IMR-90 (cell line): ENCODE measurements at regions of chr2 and their contacts with region 1.

Region 1: GRCh38 chr2:48420512-48421197 is 109.3 kb upstream of the STON1 start:
- DNase-seq: peak; percentile 88
- ATAC-seq: peak; percentile 91
- H3K4me3 ChIP-seq: no peak overlapping the region
- H3K27ac ChIP-seq: no peak overlapping the region; the same call in 1 of the 2 replicates
- H3K4me1 ChIP-seq: peaks cover 3% of the 10 kb centered on the region
- H3K27me3 ChIP-seq: no peaks in the 10 kb centered on the region
- CTCF ChIP-seq: peak; percentile 99
- POLR2A ChIP-seq: peak; percentile 50; the same call in 1 of the 2 replicates
- RAD21 ChIP-seq: peak; percentile 99

Region 2: GRCh38 chr2:47344890-47345589 is 1075.6 kb before region 1 on chr2:
- CTCF ChIA-PET with region 1: no interaction called
- POLR2A ChIA-PET with region 1: no interaction called
- dilution Hi-C with region 1: no loop called
- in situ Hi-C with region 1: no loop called
- intact Hi-C with region 1: loop called (anchors 5 kb)
- DNase-seq: peak; percentile 44
- ATAC-seq: peak; percentile 81
- H3K4me3 ChIP-seq: no peak overlapping the region
- H3K27ac ChIP-seq: no peak overlapping the region
- H3K4me1 ChIP-seq: 0 out of 2 replicates have a peak, but pooled peaks cover 2% of the 10 kb centered on the region
- H3K27me3 ChIP-seq: no peaks in the 10 kb centered on the region; the same call in 1 of the 2 replicates
- CTCF ChIP-seq: no peak
- POLR2A ChIP-seq: no peak
- RAD21 ChIP-seq: no peak

Region 3: DNA sequence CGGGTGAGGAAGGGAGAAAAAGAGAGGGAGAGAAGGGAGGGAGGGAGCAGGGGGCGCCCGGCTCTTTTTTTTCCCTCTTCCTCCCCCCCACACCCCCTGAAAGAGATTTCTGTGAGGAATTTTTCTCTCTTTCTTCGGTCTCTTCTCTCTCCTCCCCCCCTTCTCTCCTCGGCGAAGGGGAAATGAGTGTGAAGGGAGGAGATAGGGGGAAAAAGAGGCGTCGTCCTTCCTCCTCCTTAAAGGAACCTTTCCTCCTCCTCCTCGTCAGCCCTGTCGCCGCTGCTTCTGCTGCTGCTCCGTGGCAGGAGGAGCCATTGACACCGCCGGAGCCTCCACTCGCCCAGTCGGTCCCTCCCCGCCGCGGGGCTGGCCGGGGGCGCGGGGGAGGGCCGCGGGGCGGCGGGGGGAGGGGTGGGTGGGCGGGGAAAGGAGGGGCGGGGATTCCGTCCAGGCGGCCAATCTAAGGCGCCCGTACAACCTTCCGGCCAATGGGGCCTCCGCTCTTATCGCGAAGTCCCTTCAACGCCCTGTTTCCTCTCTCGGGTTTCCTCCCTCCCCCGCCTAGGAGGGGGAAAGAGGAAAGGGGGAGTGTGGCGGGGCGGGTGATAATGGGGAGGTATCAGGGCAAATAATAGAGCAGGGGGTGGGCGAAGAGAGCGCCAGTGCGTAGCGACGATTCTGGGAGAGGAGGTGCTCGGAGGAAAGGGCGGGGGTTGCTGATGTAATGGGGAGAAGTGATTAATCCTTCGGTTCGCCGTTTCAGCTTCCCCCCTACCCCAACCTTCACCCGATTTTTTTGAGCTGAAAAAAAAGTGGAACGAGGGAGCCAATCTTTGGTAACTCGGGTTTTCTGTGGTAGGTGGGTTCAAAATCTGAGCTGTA is 514.3 kb before region 1 on chr2 and contains the start of gene FBXO11:
- CTCF ChIA-PET with region 1: no interaction called
- POLR2A ChIA-PET with region 1: no interaction called
- dilution Hi-C with region 1: no loop called
- in situ Hi-C with region 1: no loop called
- intact Hi-C with region 1: loop called (anchors 2 kb)
- DNase-seq: peak; percentile 98
- ATAC-seq: peak; percentile 88
- H3K4me3 ChIP-seq: peak within 1 kb of the TSS; percentile 96
- H3K27ac ChIP-seq: peak within 1 kb of the TSS; percentile 86
- H3K4me1 ChIP-seq: no peaks in the 10 kb centered on the region
- H3K27me3 ChIP-seq: no peaks in the 10 kb centered on the region
- CTCF ChIP-seq: no peak; the same call in none of the 2 replicates
- POLR2A ChIP-seq: peak; percentile 98
- RAD21 ChIP-seq: no peak
- total RNA-seq, gene FBXO11: 27.1 and 32.2 TPM in 2 replicates